ENCODE measurements at regions of chr12 and their contacts with region 1.

Region 1: GRCh38 chr12:26473291-26473690 is 277.9 kb downstream of the SSPN start:
- DNase-seq: no peak
- H3K4me3 ChIP-seq: no peak overlapping the region
- H3K27ac ChIP-seq: no peak overlapping the region
- H3K4me1 ChIP-seq: no peaks in the 10 kb centered on the region
- H3K27me3 ChIP-seq: no peaks in the 10 kb centered on the region
- CTCF ChIP-seq: no peak

Region 2: DNA sequence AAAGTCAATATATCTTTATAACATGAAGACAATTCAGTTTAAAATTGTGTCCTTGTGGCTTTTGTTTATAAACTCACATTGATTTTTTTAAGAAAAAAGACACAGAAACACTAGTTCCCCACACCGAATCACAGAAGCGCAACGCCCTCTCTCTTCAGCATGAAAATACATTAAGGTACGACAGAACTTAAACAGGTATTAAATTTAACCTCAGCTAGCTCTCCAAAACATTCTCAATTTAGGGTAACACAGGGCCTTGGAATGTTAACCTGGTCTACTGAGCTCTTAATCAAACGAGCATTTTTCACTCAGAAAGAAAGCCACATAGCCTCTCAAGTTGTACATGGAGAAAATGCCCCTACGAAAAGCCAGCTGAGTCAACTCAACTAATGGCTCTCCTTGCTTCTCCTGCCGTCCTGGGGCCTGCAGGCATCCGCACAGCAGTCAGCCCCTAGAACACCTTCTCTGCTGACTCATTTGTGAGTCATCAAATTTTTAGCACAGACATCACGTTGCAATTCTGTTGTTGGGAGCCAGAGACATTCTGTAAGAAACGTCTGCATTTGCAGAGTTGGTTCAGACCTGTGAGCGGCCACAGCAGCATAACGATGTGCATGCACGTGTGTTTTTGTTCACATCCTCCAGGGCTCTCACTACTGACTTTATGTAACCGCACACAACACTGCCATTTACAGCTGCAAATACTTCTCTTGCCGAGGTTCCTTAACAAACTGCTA is 218.1 kb after region 1 on chr12:
- CTCF ChIA-PET with region 1: no interaction called
- POLR2A ChIA-PET with region 1: interaction called, 13 read pairs
- intact Hi-C with region 1: no loop called
- DNase-seq: peak; percentile 69 to 88
- H3K4me3 ChIP-seq: peak overlapping the region; percentile 6; the same call in 1 of the 2 replicates
- H3K27ac ChIP-seq: peak overlapping the region; percentile 44
- H3K4me1 ChIP-seq: peaks cover 16% of the 10 kb centered on the region
- H3K27me3 ChIP-seq: no peaks in the 10 kb centered on the region
- CTCF ChIP-seq: no peak